Activated CD4-positive, alpha-beta memory T cell treated with anti-CD3 and anti-CD28 coated beads for 36 hours (primary cell): ENCODE measurements at regions of chr14 and their contacts with region 1.

Region 1: DNA sequence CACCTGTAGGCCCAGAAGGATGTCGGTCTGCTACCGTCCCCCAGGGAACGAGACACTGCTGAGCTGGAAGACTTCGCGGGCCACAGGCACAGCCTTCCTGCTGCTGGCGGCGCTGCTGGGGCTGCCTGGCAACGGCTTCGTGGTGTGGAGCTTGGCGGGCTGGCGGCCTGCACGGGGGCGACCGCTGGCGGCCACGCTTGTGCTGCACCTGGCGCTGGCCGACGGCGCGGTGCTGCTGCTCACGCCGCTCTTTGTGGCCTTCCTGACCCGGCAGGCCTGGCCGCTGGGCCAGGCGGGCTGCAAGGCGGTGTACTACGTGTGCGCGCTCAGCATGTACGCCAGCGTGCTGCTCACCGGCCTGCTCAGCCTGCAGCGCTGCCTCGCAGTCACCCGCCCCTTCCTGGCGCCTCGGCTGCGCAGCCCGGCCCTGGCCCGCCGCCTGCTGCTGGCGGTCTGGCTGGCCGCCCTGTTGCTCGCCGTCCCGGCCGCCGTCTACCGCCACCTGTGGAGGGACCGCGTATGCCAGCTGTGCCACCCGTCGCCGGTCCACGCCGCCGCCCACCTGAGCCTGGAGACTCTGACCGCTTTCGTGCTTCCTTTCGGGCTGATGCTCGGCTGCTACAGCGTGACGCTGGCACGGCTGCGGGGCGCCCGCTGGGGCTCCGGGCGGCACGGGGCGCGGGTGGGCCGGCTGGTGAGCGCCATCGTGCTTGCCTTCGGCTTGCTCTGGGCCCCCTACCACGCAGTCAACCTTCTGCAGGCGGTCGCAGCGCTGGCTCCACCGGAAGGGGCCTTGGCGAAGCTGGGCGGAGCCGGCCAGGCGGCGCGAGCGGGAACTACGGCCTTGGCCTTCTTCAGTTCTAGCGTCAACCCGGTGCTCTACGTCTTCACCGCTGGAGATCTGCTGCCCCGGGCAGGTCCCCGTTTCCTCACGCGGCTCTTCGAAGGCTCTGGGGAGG is at the start of gene LTB4R:
- DNase-seq: peak; percentile 81
- H3K4me3 Mint-ChIP-seq: peak within 1 kb of the TSS; percentile 79
- H3K27ac Mint-ChIP-seq: peak within 1 kb of the TSS; percentile 84
- H3K4me1 Mint-ChIP-seq: peaks cover 69% of the 10 kb centered on the region
- H3K27me3 Mint-ChIP-seq: no peaks in the 10 kb centered on the region
- total RNA-seq, gene LTB4R: 15.4 to 16.7 TPM

Region 2: GRCh38 chr14:24232121-24232644 is 78.7 kb before region 1 on chr14 and contains the start of gene NEDD8:
- CTCF ChIA-PET with region 1: interaction called, 37 read pairs
- POLR2A ChIA-PET with region 1: interaction called, 4 read pairs
- intact Hi-C with region 1: no loop called
- DNase-seq: peak; percentile 96
- H3K4me3 Mint-ChIP-seq: peak within 1 kb of the TSS; percentile 93
- H3K27ac Mint-ChIP-seq: peak within 1 kb of the TSS; percentile 90
- H3K4me1 Mint-ChIP-seq: peaks cover 55% of the 10 kb centered on the region
- H3K27me3 Mint-ChIP-seq: no peaks in the 10 kb centered on the region
- total RNA-seq, gene NEDD8: 202 to 213 TPM

Region 3: DNA sequence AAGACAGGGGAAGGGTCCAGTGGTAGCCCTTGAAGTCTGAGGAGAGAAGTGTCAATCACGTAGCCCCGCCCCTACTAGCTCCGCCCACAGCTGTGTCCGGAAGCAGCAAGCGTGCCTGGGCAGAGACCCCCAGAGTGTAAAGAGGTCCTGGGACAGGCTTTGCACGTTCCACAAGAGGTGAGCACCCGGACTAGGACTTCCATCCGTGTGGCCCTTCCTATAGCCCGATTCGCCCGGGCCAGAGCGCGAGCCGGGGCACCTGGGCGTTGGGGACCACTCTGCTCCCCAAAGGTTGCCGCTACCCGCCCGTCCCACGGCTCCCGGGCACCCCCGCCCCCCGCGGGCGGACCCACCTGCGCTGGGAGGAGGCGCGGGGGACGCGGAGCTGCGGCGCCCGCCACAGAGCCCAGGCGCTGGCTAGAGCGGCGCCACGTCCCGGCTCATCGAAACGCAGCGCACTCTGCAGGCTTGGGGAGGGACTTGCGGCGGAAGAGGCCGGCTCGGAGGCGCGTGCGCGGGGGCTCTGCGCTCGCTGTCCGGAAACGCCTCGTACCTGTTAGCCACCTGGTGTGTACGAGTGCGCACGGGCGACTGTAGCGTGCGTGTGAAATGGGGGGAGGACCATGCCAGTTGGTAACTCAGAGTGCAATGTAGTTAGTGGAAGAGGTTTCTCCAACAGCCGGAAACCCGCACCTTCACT is 39.6 kb before region 1 on chr14 and contains the start of gene RABGGTA:
- CTCF ChIA-PET with region 1: interaction called, 17 read pairs
- POLR2A ChIA-PET with region 1: interaction called, 9 read pairs
- intact Hi-C with region 1: loop called (anchors 1 kb)
- DNase-seq: peak; percentile 93
- H3K4me3 Mint-ChIP-seq: peak within 1 kb of the TSS; percentile 84
- H3K27ac Mint-ChIP-seq: peak within 1 kb of the TSS; percentile 94
- H3K4me1 Mint-ChIP-seq: peaks cover 42% of the 10 kb centered on the region
- H3K27me3 Mint-ChIP-seq: no peaks in the 10 kb centered on the region
- total RNA-seq, gene RABGGTA: 39.5 to 40.6 TPM

Region 4: GRCh38 chr14:24289649-24290249 is 21.2 kb before region 1 on chr14:
- CTCF ChIA-PET with region 1: interaction called, 23 read pairs
- POLR2A ChIA-PET with region 1: no interaction called
- intact Hi-C with region 1: no loop called
- DNase-seq: peak; percentile 90
- H3K4me3 Mint-ChIP-seq: no peak overlapping the region
- H3K27ac Mint-ChIP-seq: peak overlapping the region; percentile 8
- H3K4me1 Mint-ChIP-seq: peaks cover 25% of the 10 kb centered on the region
- H3K27me3 Mint-ChIP-seq: peaks cover 2% of the 10 kb centered on the region

Region 5: GRCh38 chr14:24741871-24742270 is 430.9 kb after region 1 on chr14:
- CTCF ChIA-PET with region 1: no interaction called
- POLR2A ChIA-PET with region 1: no interaction called
- intact Hi-C with region 1: no loop called
- DNase-seq: no peak
- H3K4me3 Mint-ChIP-seq: no peak overlapping the region
- H3K27ac Mint-ChIP-seq: no peak overlapping the region
- H3K4me1 Mint-ChIP-seq: no peaks in the 10 kb centered on the region
- H3K27me3 Mint-ChIP-seq: peaks cover 4% of the 10 kb centered on the region

Region 6: GRCh38 chr14:24774187-24774915 is 463.4 kb after region 1 on chr14:
- CTCF ChIA-PET with region 1: no interaction called
- POLR2A ChIA-PET with region 1: no interaction called
- intact Hi-C with region 1: no loop called
- DNase-seq: no peak
- H3K4me3 Mint-ChIP-seq: no peak overlapping the region
- H3K27ac Mint-ChIP-seq: no peak overlapping the region
- H3K4me1 Mint-ChIP-seq: no peaks in the 10 kb centered on the region
- H3K27me3 Mint-ChIP-seq: peaks cover 14% of the 10 kb centered on the region